ENCODE measurements at regions of chr2 and their contacts with region 1.

Region 1: GRCh38 chr2:73176881-73177644 is 25.3 kb upstream of the NOTO start:
- DNase-seq: peak; percentile 80 to 94 (median 91)
- ATAC-seq: peak; percentile 92
- H3K4me3 ChIP-seq: peak overlapping the region; percentile 65
- H3K4me3 Mint-ChIP-seq: peak overlapping the region; percentile 89
- H3K27ac ChIP-seq: no peak overlapping the region
- H3K27ac Mint-ChIP-seq: no peak overlapping the region
- H3K4me1 ChIP-seq: peaks cover 26% of the 10 kb centered on the region
- H3K4me1 Mint-ChIP-seq: peaks cover 14% of the 10 kb centered on the region
- H3K27me3 ChIP-seq: peaks cover 6 to 11% of the 10 kb centered on the region in 2 experiments
- H3K27me3 Mint-ChIP-seq: peaks cover 20% of the 10 kb centered on the region
- CTCF ChIP-seq: peak; percentile 92

Region 2: GRCh38 chr2:72770879-72771461 is 406.1 kb before region 1 on chr2:
- CTCF ChIA-PET with region 1: no interaction called
- POLR2A ChIA-PET with region 1: no interaction called
- intact Hi-C with region 1: loop called in 1 of 2 experiments (anchors 2 kb)
- DNase-seq: peak; percentile 10 to 80 (median 57)
- ATAC-seq: peak; percentile 49
- H3K4me3 ChIP-seq: no peak overlapping the region
- H3K4me3 Mint-ChIP-seq: no peak overlapping the region
- H3K27ac ChIP-seq: no peak overlapping the region
- H3K27ac Mint-ChIP-seq: no peak overlapping the region
- H3K4me1 ChIP-seq: no peaks in the 10 kb centered on the region
- H3K4me1 Mint-ChIP-seq: no peaks in the 10 kb centered on the region
- H3K27me3 ChIP-seq: no peaks in the 10 kb centered on the region
- H3K27me3 Mint-ChIP-seq: no peaks in the 10 kb centered on the region
- CTCF ChIP-seq: peak; percentile 94

Region 3: GRCh38 chr2:72993147-72993932 is 183.7 kb before region 1 on chr2:
- CTCF ChIA-PET with region 1: interaction called, 122 read pairs
- POLR2A ChIA-PET with region 1: interaction called, 3 read pairs
- intact Hi-C with region 1: loop called in 1 of 2 experiments (anchors 1 kb)
- DNase-seq: peak in 8 of 9 experiments; percentile 7 to 72 (median 54)
- ATAC-seq: peak; percentile 46
- H3K4me3 ChIP-seq: no peak overlapping the region
- H3K4me3 Mint-ChIP-seq: no peak overlapping the region
- H3K27ac ChIP-seq: no peak overlapping the region
- H3K27ac Mint-ChIP-seq: no peak overlapping the region
- H3K4me1 ChIP-seq: no peaks in the 10 kb centered on the region
- H3K4me1 Mint-ChIP-seq: no peaks in the 10 kb centered on the region
- H3K27me3 ChIP-seq: no peaks in the 10 kb centered on the region
- H3K27me3 Mint-ChIP-seq: no peaks in the 10 kb centered on the region
- CTCF ChIP-seq: peak; percentile 83

Region 4: DNA sequence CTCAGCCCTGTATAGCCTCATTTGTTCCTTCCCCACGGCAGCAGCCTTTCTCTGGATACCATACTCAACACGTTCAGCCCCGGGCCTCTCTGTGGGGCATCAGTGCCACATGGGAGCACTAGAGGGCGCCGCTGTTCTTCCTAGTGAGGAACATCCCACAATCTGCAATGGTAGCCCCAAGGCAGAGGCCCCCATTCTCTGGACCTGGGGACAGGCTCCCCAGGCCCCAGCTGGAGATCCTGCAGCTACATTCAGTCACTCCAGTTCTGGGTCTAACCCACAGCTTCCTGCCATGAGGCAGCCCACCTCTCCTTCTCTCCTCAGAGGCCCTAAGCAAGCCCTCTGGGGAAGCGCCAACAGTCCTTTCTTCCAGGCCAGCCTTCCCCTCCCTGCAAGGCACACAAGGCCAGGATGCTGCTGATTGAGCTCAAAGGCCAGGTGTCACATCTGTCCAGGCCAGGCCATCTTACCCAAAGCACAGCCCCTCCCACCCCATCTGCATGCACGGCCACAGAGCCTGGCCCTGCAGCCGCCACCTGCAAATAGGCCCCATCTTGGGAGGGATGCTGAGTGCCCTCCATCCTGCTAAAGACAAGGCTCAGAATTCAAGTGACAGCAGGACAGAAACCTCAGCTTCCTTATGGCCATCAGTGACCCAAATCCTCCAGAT is 91.2 kb before region 1 on chr2:
- CTCF ChIA-PET with region 1: interaction called, 106 read pairs
- POLR2A ChIA-PET with region 1: no interaction called
- intact Hi-C with region 1: loop called (anchors 1 kb)
- DNase-seq: peak; percentile 69 to 87 (median 82)
- ATAC-seq: peak; percentile 99
- H3K4me3 ChIP-seq: no peak overlapping the region
- H3K4me3 Mint-ChIP-seq: no peak overlapping the region
- H3K27ac ChIP-seq: no peak overlapping the region
- H3K27ac Mint-ChIP-seq: no peak overlapping the region
- H3K4me1 ChIP-seq: no peaks in the 10 kb centered on the region
- H3K4me1 Mint-ChIP-seq: no peaks in the 10 kb centered on the region
- H3K27me3 ChIP-seq: no peaks in the 10 kb centered on the region
- H3K27me3 Mint-ChIP-seq: no peaks in the 10 kb centered on the region
- CTCF ChIP-seq: peak; percentile 70

Region 5: GRCh38 chr2:73156539-73157124 is 20.4 kb before region 1 on chr2:
- CTCF ChIA-PET with region 1: interaction called, 17 read pairs
- POLR2A ChIA-PET with region 1: no interaction called
- intact Hi-C with region 1: no loop called
- DNase-seq: peak in 6 of 9 experiments; percentile 12 to 58 (median 46)
- ATAC-seq: no peak
- H3K4me3 ChIP-seq: no peak overlapping the region
- H3K4me3 Mint-ChIP-seq: no peak overlapping the region
- H3K27ac ChIP-seq: no peak overlapping the region
- H3K27ac Mint-ChIP-seq: no peak overlapping the region
- H3K4me1 ChIP-seq: no peaks in the 10 kb centered on the region
- H3K4me1 Mint-ChIP-seq: no peaks in the 10 kb centered on the region
- H3K27me3 ChIP-seq: peaks cover 0 to 10% of the 10 kb centered on the region in 2 experiments
- H3K27me3 Mint-ChIP-seq: peaks cover 49% of the 10 kb centered on the region
- CTCF ChIP-seq: no peak

Region 6: GRCh38 chr2:73212448-73213176 is 35.5 kb after region 1 on chr2:
- CTCF ChIA-PET with region 1: interaction called, 65 read pairs
- POLR2A ChIA-PET with region 1: interaction called, 5 read pairs
- intact Hi-C with region 1: loop called (anchors 1 kb)
- DNase-seq: peak; percentile 51 to 84 (median 73)
- ATAC-seq: peak; percentile 67
- H3K4me3 ChIP-seq: no peak overlapping the region
- H3K4me3 Mint-ChIP-seq: peak overlapping the region; percentile 98
- H3K27ac ChIP-seq: no peak overlapping the region
- H3K27ac Mint-ChIP-seq: peak overlapping the region; percentile 30
- H3K4me1 ChIP-seq: peaks cover 26% of the 10 kb centered on the region
- H3K4me1 Mint-ChIP-seq: peaks cover 33% of the 10 kb centered on the region
- H3K27me3 ChIP-seq: no peaks in the 10 kb centered on the region
- H3K27me3 Mint-ChIP-seq: peaks cover 7% of the 10 kb centered on the region
- CTCF ChIP-seq: peak; percentile 81

Region 7: DNA sequence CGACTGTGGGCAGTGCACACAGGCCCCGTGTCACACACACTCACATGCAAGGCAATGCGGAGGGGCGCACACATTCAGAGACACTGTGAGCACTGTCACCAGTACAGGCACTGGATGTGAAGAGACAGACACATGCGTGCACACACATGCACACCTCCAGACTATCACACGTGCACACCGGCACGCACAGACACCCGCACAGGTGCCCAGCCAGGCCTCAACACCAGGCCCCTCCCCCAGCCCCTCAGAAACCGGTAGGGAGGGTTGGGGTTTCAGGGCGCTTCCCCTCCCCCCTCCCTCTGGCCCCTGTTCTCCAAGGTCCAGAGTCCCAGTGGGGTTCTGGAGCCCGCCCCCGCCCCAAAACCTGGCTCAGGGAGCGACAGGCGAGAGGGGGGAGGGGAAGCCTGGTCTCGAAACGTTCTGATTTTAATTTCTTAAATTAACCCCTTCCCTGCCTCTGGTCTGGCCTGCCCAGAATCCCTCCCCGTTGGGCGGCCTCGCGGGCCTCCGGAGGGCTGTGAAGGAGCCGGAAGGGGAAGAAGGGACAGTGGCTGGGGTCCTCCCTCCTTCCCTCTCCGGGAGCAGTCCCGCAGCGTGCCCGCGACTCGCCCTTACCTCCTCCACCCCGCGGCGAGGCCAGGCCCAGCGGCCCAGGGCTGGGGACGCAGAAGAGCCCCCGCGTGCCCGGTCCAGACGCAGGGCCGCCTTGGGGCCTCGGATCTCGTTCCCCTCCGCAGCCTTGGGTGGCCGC is 106.7 kb after region 1 on chr2:
- CTCF ChIA-PET with region 1: no interaction called
- POLR2A ChIA-PET with region 1: no interaction called
- intact Hi-C with region 1: no loop called
- DNase-seq: peak in 2 of 9 experiments; percentile 27 to 48
- ATAC-seq: peak; percentile 29
- H3K4me3 ChIP-seq: peak overlapping the region; percentile 77 to 81
- H3K4me3 Mint-ChIP-seq: peak overlapping the region; percentile 91
- H3K27ac ChIP-seq: peak overlapping the region; percentile 40 to 61
- H3K27ac Mint-ChIP-seq: peak overlapping the region; percentile 75
- H3K4me1 ChIP-seq: peaks cover 20% of the 10 kb centered on the region
- H3K4me1 Mint-ChIP-seq: peaks cover 24% of the 10 kb centered on the region
- H3K27me3 ChIP-seq: no peaks in the 10 kb centered on the region
- H3K27me3 Mint-ChIP-seq: peaks cover 5% of the 10 kb centered on the region
- CTCF ChIP-seq: no peak

Region 8: DNA sequence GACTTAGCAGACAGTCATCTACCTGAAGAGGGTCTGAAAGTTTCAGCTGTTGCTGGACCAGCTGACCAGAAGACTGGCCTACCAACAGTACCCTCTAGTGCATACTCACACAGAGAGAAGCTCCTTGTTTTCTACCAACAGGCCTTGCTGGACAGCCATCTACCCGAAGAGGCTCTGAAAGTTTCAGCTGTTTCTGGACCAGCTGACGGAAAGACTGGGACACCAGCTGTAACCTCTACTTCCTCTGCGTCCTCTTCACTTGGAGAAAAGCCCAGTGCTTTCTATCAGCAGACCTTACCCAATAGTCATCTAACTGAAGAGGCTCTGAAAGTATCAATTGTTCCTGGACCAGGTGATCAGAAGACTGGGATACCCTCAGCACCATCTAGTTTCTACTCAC is 271.8 kb after region 1 on chr2:
- CTCF ChIA-PET with region 1: no interaction called
- POLR2A ChIA-PET with region 1: no interaction called
- intact Hi-C with region 1: no loop called
- DNase-seq: no peak
- ATAC-seq: no peak
- H3K4me3 ChIP-seq: no peak overlapping the region
- H3K4me3 Mint-ChIP-seq: no peak overlapping the region
- H3K27ac ChIP-seq: no peak overlapping the region
- H3K27ac Mint-ChIP-seq: no peak overlapping the region
- H3K4me1 ChIP-seq: no peaks in the 10 kb centered on the region
- H3K4me1 Mint-ChIP-seq: no peaks in the 10 kb centered on the region
- H3K27me3 ChIP-seq: no peaks in the 10 kb centered on the region
- H3K27me3 Mint-ChIP-seq: no peaks in the 10 kb centered on the region
- CTCF ChIP-seq: no peak

Region 9: GRCh38 chr2:73494031-73494430 is 317.0 kb after region 1 on chr2:
- CTCF ChIA-PET with region 1: no interaction called
- POLR2A ChIA-PET with region 1: no interaction called
- intact Hi-C with region 1: no loop called
- DNase-seq: no peak
- ATAC-seq: no peak
- H3K4me3 ChIP-seq: no peak overlapping the region
- H3K4me3 Mint-ChIP-seq: no peak overlapping the region
- H3K27ac ChIP-seq: no peak overlapping the region
- H3K27ac Mint-ChIP-seq: no peak overlapping the region
- H3K4me1 ChIP-seq: no peaks in the 10 kb centered on the region
- H3K4me1 Mint-ChIP-seq: peaks cover under 1% of the 10 kb centered on the region
- H3K27me3 ChIP-seq: no peaks in the 10 kb centered on the region
- H3K27me3 Mint-ChIP-seq: no peaks in the 10 kb centered on the region
- CTCF ChIP-seq: no peak